AG04450 (cell line): ENCODE measurements at regions of chr5 and their contacts with region 1.

Region 1: DNA sequence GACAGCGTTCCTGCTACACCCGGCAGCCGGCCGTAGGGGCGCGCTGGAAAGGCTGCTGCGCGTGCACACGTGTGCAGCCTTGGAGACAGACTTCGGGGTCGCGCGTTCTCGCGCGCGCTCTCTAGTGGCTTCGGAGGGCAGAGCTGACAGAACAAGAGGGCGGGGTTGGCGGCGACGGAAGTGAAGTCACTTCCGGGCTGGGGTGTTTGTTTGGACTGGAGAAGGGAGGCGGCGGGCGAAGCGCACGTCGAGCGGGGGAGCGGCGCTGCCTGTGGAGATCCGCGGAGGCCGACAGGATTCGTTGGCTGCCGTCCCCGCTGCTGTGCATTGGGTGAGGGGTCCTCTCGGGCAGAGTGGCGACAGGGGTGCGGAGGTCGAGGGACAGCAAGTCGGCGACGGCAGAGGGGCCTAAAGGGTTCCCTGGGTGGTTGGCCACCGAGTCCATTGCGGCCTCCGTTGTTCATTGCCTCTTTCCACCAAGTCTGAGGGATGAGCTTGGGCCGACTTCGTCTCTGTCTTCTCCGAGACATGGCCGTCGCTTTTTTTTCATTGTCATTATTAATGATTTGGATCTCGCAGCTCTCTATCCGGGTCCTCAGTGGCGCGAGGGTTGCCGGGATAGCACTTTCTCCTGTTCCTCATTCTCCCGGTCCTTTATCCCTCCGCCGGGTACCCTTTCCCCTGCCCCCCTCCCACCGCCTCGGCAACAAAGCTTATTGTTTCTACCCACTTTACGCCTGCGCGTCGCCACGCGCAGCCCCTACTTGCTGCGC is at the start of gene PAIP2:
- DNase-seq: peak; percentile 95
- H3K4me3 ChIP-seq: peak within 1 kb of the TSS; percentile 100
- H3K27ac ChIP-seq: peak within 1 kb of the TSS; percentile 99
- H3K27me3 ChIP-seq: no peaks in the 10 kb centered on the region
- CTCF ChIP-seq: peak; percentile 71
- polyA plus RNA-seq, gene PAIP2: 76.3 and 113 TPM in 2 replicates

Region 2: GRCh38 chr5:139065306-139065705 is 276.5 kb before region 1 on chr5:
- CTCF ChIA-PET with region 1: no interaction called
- POLR2A ChIA-PET with region 1: no interaction called
- DNase-seq: no peak
- H3K4me3 ChIP-seq: no peak overlapping the region
- H3K27ac ChIP-seq: no peak overlapping the region
- H3K27me3 ChIP-seq: no peaks in the 10 kb centered on the region
- CTCF ChIP-seq: no peak

Region 3: DNA sequence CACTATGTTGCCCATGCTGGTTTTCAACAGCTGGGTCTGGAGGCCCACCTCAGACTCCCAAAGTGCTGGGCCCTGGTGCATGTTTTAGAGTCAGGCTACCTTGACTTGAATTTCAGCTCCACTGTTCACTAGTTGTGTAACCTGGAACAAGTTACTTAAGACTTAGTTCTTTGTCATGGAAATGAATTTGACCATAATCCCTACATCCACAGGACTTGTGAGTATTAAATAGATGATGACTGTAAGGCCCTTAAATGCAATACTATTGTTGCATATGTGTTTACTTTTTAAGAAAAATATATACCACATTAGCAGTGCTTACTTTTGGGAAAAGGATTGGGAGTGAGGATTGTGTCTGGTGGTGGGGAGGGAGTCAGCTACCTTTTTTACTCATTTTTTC is 16.2 kb after region 1 on chr5:
- CTCF ChIA-PET with region 1: interaction called, 15 read pairs
- POLR2A ChIA-PET with region 1: interaction called, 4 read pairs
- DNase-seq: no peak
- H3K4me3 ChIP-seq: no peak overlapping the region
- H3K27ac ChIP-seq: no peak overlapping the region
- H3K27me3 ChIP-seq: no peaks in the 10 kb centered on the region
- CTCF ChIP-seq: no peak

Region 4: DNA sequence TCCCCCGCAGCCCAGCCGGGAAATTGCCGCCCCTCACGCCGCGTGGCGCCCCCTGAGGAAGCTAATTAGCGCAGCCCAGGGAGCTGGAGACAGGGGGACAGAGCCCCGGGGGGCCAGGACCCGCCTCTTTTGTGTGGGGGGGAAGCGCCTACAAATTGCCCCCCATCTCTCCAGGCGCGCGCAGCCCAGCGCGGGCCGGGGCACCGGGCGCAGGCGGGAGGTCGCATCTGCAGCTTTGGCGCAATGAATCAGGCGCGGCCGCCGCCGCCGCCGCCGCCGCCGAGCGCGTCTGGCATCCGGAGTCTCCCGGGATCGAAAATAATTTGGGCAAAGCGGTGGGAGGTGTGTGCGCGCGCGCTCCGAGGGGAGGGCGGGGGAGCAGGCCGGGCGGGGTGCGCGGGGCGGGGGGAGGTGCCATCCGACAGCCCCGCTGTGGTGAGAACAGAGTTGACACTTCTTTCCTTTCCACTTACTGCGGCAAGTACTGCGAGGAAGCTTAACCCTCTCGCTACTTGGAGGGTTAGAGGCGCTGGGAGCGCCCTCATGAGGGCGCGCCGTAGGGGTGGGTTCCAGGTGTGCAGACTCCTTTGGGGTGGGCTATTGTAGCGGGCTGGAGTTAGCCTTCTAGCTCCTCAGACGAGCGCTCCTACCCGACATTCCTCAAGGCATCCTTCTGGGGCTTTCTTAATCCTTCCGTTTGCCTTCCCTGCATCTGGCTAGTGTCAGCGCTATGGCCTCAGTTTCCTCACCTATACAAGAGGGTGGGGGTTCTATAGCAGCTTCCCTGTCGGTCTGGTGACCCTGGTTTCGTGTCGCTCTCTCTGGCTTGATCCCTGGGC is 369.4 kb after region 1 on chr5:
- CTCF ChIA-PET with region 1: no interaction called
- POLR2A ChIA-PET with region 1: no interaction called
- DNase-seq: no peak
- H3K4me3 ChIP-seq: peak overlapping the region; percentile 57
- H3K27ac ChIP-seq: no peak overlapping the region
- H3K27me3 ChIP-seq: peaks cover 6% of the 10 kb centered on the region
- CTCF ChIP-seq: peak; percentile 18